Ovary (tissue), 10 donors: ENCODE measurements at regions of chr2 and their contacts with region 1.

Region 1: DNA sequence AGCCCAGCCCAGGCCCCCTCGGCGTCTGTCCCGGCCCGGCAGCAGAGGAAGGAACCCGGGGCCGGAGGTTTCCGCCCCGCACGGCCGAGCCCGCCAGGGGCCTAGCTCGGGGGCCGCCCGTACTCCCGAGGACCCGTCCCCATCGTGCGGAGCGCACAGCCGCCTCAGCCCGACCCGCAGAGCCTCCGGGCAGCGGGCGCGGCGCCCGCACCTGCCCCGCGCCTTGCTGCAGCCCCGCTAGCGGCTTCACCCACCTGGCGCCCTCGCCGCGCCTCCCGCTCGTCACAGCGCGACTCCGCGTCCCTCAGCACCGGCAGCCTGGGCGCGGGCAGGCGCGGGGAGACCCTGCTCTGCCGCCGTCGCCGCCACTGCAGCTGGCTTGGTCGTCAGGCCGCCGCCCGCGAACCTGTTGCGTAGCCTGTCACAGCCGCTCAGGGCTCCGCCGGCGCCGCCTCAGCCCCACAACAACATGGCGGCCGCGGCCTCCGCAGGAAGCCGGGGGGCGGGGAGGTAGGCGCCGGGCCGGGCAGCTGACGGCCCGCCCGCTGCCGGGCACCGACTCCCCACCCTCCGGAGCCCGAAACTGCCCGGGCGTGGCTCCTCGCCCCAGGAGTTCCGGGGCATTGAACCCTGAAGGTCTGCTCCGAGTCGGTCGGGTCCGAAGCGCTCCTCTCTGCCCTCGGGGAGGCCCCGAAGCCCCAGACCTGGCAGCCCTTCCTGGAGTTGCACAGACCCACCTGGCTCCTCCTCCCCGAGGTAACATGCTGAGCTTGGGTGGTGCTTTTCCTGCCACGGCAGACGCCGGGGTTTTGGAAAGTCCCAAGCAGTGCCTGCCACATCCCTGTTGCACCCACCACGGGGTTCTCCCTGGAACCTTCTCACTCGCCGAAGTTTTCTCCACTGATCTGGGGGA is at the start of gene ITSN2:
- DNase-seq: peak; percentile 67 to 82 (median 75)
- H3K4me3 ChIP-seq: peak within 1 kb of the TSS; percentile 78
- H3K27ac ChIP-seq: peak within 1 kb of the TSS; percentile 88 to 96
- H3K4me1 ChIP-seq: peaks cover 6% of the 10 kb centered on the region
- H3K27me3 ChIP-seq: no peaks in the 10 kb centered on the region
- CTCF ChIP-seq: no peak
- EP300 ChIP-seq: no peak
- POLR2A ChIP-seq: peak; percentile 56
- total RNA-seq, gene ITSN2: 34.2 to 44.4 (median 39.8) TPM

Region 2: GRCh38 chr2:24214880-24215279 is 145.4 kb before region 1 on chr2:
- intact Hi-C with region 1: no loop called
- DNase-seq: no peak
- H3K4me3 ChIP-seq: no peak overlapping the region
- H3K27ac ChIP-seq: no peak overlapping the region
- H3K4me1 ChIP-seq: no peaks in the 10 kb centered on the region
- H3K27me3 ChIP-seq: no peaks in the 10 kb centered on the region
- CTCF ChIP-seq: no peak
- EP300 ChIP-seq: no peak
- POLR2A ChIP-seq: no peak

Region 3: GRCh38 chr2:24301599-24301998 is 58.7 kb before region 1 on chr2:
- intact Hi-C with region 1: loop called in 1 of 4 experiments (anchors 2 kb)
- DNase-seq: no peak
- H3K4me3 ChIP-seq: no peak overlapping the region
- H3K27ac ChIP-seq: no peak overlapping the region
- H3K4me1 ChIP-seq: peaks cover 4% of the 10 kb centered on the region
- H3K27me3 ChIP-seq: no peaks in the 10 kb centered on the region
- CTCF ChIP-seq: no peak
- EP300 ChIP-seq: no peak
- POLR2A ChIP-seq: no peak

Region 4: DNA sequence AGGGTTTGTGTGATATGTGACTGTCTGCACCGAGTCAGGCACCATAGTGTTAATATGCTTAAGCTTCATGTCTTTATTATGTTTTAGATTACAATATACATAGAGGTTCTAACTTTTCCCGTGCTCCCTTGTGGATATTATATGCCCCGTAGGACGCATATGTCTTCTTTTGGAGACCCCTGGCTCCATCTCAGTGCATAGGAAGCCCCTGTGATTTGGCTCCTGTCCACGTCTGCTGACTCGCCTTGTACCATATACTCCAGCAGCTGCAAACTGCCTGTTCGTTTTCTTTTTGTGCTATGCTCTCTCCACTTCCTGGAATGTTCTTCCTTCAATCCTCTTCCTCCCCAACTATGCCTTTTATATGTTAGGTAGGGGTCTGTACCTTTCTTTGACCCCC is 322.0 kb after region 1 on chr2:
- intact Hi-C with region 1: no loop called
- DNase-seq: no peak
- H3K4me3 ChIP-seq: no peak overlapping the region
- H3K27ac ChIP-seq: no peak overlapping the region
- H3K4me1 ChIP-seq: no peaks in the 10 kb centered on the region
- H3K27me3 ChIP-seq: no peaks in the 10 kb centered on the region
- CTCF ChIP-seq: no peak
- EP300 ChIP-seq: no peak
- POLR2A ChIP-seq: no peak